Activated CD4-positive, alpha-beta memory T cell treated with anti-CD3 and anti-CD28 coated beads, Interleukin-2, amount 10 ng/mL, durations not matched to agents 7 days and 5 days (primary cell): ENCODE measurements at regions of chr4 and their contacts with region 1.

Region 1: DNA sequence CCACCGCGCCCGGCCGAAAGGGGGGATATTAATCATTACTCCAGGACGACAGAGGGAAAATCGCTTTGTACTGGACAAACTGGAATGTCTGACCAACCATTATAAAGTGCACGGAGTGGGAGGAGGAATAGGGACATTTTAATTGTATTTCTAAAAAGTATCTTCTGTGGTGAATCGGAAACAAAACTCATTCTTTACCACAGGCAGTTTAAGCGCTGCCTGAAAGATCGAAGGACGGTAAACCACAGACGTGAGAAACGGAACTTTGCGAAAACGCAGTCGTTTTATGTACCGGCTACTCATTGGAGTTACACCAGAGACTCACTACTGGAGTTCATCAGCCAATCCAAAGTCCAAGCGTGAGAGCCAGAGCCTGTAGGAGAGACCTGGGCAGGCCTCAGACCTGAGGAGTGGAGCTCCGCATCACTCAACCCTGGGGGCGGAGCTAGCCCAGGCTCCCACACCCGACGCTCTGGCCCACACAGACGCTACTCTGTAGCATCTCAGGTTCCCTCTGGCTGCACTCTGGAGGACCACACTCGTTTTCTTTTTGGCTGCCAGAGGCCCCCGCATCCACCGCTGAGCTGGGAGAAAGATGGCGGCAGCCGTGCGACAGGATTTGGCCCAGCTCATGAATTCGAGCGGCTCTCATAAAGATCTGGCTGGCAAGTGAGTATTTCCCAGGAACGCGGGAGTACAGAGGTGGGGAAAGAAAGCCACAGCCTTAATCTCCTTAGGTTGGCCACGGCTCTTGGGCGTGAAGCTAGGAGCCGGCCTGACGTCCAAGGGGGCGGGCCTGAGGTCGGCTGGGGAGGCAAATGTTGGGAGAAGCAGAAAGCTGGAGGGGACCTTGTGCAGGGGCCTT is at the start of gene COPS4:
- DNase-seq: peak; percentile 97
- H3K4me3 Mint-ChIP-seq: peak within 1 kb of the TSS; percentile 95
- H3K27ac Mint-ChIP-seq: peak within 1 kb of the TSS; percentile 99
- H3K4me1 Mint-ChIP-seq: peaks cover 31% of the 10 kb centered on the region
- H3K27me3 Mint-ChIP-seq: peaks cover 11% of the 10 kb centered on the region
- total RNA-seq, gene COPS4: 30.9 to 32.8 TPM

Region 2: GRCh38 chr4:82890901-82891706 is 143.8 kb before region 1 on chr4 and contains the start of gene SEC31A:
- CTCF ChIA-PET with region 1: no interaction called
- POLR2A ChIA-PET with region 1: interaction called, 10 read pairs
- DNase-seq: peak; percentile 98
- H3K4me3 Mint-ChIP-seq: peak within 1 kb of the TSS; percentile 83
- H3K27ac Mint-ChIP-seq: peak within 1 kb of the TSS; percentile 88
- H3K4me1 Mint-ChIP-seq: peaks cover 54% of the 10 kb centered on the region
- H3K27me3 Mint-ChIP-seq: no peaks in the 10 kb centered on the region
- total RNA-seq, gene SEC31A: 102 to 108 TPM

Region 3: GRCh38 chr4:82900331-82901128 is 134.3 kb before region 1 on chr4 and contains the start of gene THAP9:
- CTCF ChIA-PET with region 1: interaction called, 4 read pairs
- POLR2A ChIA-PET with region 1: interaction called, 21 read pairs
- DNase-seq: peak; percentile 99
- H3K4me3 Mint-ChIP-seq: no peak within 1 kb of the TSS
- H3K27ac Mint-ChIP-seq: no peak within 1 kb of the TSS
- H3K4me1 Mint-ChIP-seq: peaks cover 37% of the 10 kb centered on the region
- H3K27me3 Mint-ChIP-seq: peaks cover 9% of the 10 kb centered on the region
- total RNA-seq, gene THAP9: 2.0 to 2.4 TPM

Region 4: GRCh38 chr4:83012687-83013419 is 22.0 kb before region 1 on chr4:
- CTCF ChIA-PET with region 1: interaction called, 19 read pairs
- POLR2A ChIA-PET with region 1: interaction called, 96 read pairs
- DNase-seq: peak; percentile 98
- H3K4me3 Mint-ChIP-seq: peak overlapping the region; percentile 88
- H3K27ac Mint-ChIP-seq: peak overlapping the region; percentile 78
- H3K4me1 Mint-ChIP-seq: peaks cover 38% of the 10 kb centered on the region
- H3K27me3 Mint-ChIP-seq: no peaks in the 10 kb centered on the region

Region 5: DNA sequence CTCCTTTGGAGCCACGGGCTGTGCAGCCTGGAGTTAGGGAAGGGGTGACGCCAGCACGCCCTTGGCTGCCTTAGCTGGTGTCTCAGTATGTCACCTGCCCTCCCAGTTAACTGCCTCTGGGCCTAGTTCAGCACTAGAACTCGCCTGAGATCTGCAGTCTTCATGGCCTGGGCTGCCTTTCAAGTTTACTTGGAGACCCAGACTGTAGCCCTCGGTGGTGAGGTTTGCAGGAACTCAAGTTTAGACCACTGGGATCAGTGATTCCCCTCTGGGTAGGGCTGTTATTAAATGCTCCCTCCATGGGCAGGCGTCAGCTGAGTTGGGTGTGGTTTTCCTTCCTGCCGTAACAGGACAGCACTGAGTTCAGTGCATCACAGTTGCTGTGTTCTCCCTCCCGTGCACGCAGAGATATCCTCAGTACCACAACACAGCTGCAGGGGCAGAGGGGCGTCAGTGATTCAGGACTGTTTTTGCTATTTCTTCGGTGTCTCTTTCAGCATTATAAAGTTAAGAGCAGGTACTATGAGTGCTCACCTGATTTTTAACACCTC is 49.1 kb after region 1 on chr4:
- CTCF ChIA-PET with region 1: interaction called, 10 read pairs
- POLR2A ChIA-PET with region 1: interaction called, 5 read pairs
- DNase-seq: peak; percentile 78
- H3K4me3 Mint-ChIP-seq: peak overlapping the region; percentile 16
- H3K27ac Mint-ChIP-seq: peak overlapping the region; percentile 78
- H3K4me1 Mint-ChIP-seq: peaks cover 31% of the 10 kb centered on the region
- H3K27me3 Mint-ChIP-seq: no peaks in the 10 kb centered on the region

Region 6: DNA sequence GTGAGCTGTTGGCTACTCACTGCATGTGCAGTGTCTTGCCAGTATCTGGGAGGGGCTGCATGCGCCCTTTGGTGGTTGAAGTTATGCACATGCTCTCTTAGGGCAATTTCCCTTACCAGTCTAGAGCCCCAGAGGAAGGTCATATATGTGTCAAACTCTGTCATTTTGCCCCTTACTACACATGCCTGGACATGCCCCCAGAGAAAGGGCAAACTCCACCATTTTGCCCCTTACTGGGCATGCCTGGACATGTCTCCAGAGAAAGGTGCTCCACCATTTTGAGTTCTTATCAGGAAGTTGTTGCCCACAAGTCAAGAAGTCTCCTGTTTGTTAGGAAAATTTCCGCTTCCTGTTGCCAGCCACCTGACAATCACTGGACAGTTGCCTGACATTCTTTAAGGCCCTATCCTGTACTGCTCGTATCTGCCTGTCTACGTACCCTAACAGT is 136.1 kb after region 1 on chr4:
- CTCF ChIA-PET with region 1: no interaction called
- POLR2A ChIA-PET with region 1: no interaction called
- DNase-seq: no peak
- H3K4me3 Mint-ChIP-seq: no peak overlapping the region
- H3K27ac Mint-ChIP-seq: no peak overlapping the region
- H3K4me1 Mint-ChIP-seq: peaks cover 12% of the 10 kb centered on the region
- H3K27me3 Mint-ChIP-seq: peaks cover 22% of the 10 kb centered on the region

Region 7: DNA sequence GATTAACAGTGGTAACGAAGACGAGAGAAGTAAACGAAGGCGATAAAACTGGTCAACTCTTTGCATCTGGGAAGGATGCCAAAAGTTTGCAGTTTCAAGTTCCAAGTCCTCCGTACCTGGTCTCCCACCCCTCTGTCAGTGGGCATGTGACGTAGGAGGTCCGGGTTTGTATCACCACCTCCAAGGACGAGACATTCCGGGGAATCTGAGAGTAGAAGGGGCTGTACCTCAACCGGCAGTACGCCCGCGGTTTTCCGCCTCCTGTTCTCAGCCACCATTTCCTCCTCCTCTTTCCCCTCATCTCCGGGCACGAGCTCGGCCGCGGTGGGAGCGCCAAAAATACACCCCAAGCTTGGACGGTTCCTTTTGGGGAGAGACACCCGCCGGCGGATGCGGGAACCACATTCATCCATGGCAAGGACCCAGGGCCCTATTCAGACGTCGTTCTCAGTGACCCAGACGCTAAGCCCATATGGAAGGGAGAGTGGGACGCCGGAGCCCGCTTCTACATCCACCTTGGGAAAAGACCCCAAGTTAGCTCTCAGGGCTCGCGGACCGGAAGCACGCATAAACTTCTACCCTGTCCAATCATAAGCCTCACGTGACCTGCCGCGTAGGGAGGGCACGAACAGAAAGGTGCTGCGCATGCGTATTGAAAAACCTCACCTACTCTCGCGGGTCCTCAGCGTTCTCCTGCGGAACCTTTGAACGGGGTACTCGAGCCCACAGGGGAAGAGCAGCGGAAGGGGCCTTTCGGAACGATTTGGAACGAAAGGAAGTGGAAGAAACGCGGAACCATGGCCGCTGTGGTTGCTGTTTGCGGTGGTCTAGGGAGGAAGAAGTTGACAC is 420.6 kb after region 1 on chr4 and contains the starts of genes HELQ and MRPS18C:
- CTCF ChIA-PET with region 1: no interaction called
- POLR2A ChIA-PET with region 1: interaction called, 11 read pairs
- DNase-seq: peak; percentile 97
- H3K4me3 Mint-ChIP-seq: peak within 1 kb of the TSS; percentile 99
- H3K27ac Mint-ChIP-seq: peak within 1 kb of the TSS; percentile 100
- H3K4me1 Mint-ChIP-seq: peaks cover 49% of the 10 kb centered on the region
- H3K27me3 Mint-ChIP-seq: no peaks in the 10 kb centered on the region
- total RNA-seq, gene HELQ: 16.4 to 17.8 TPM
- total RNA-seq, gene MRPS18C: 58.1 to 58.5 TPM